Activated CD4-positive, alpha-beta memory T cell treated with anti-CD3 and anti-CD28 coated beads for 36 hours (primary cell): ENCODE measurements at regions of chr7 and their contacts with region 1.

Region 1: DNA sequence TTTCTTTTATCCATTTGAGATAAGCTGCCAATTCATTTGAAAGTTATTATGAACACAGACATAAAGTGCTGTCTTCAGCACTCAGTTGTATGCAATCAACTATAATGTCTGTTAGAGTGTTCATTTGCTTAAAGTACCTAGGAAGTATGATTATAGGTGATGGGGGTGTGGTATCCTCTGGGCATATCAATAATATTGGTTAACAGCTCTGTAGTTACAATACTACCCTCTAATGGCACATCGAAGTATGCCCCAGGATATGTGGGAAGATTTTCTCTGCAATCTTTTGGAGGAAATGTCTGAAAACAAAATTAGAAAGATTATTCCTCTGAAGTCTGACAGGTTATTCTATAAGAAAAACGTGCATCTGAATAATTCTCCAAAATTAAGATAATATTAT is 429.7 kb downstream of the ARL4A start:
- DNase-seq: no peak
- H3K4me3 Mint-ChIP-seq: no peak overlapping the region
- H3K27ac Mint-ChIP-seq: no peak overlapping the region
- H3K4me1 Mint-ChIP-seq: no peaks in the 10 kb centered on the region
- H3K27me3 Mint-ChIP-seq: peaks cover 4% of the 10 kb centered on the region

Region 2: GRCh38 chr7:12715372-12716133 is 401.6 kb before region 1 on chr7:
- CTCF ChIA-PET with region 1: no interaction called
- POLR2A ChIA-PET with region 1: no interaction called
- intact Hi-C with region 1: loop called (anchors 10 kb)
- DNase-seq: peak; percentile 53
- H3K4me3 Mint-ChIP-seq: no peak overlapping the region
- H3K27ac Mint-ChIP-seq: no peak overlapping the region
- H3K4me1 Mint-ChIP-seq: peaks cover 22% of the 10 kb centered on the region
- H3K27me3 Mint-ChIP-seq: no peaks in the 10 kb centered on the region

Region 3: DNA sequence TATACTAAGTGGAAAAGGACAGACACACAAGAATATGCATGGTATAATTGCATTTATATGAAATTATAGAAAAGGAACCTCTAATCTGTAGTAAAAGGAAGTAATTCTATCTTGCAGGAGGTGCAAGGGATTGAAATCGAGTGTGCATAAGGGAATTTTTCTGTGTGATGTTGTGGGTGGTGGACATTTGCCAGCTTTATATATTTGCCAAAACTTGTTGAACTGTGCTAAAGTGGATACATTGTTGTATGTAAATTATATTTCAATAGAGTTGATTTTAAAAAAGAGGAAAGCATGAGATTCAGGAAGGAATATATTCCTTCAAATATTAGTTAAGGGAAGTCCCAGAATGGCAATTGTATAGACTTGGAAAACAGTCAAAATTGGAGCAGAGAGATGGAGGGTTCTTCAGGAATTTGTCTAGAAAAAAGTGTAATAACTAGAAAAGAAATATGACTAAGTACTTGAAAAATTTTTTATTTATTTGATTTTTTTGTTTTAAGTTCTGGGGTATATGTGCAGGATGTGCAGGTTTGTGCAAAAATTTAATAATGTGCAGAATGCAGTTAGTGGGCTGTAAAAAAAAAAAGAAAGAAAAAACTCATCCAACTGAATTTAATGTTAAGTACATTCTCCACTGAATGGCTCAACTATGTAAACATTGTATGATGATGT is 333.5 kb before region 1 on chr7:
- CTCF ChIA-PET with region 1: no interaction called
- POLR2A ChIA-PET with region 1: no interaction called
- intact Hi-C with region 1: no loop called
- DNase-seq: no peak
- H3K4me3 Mint-ChIP-seq: no peak overlapping the region
- H3K27ac Mint-ChIP-seq: no peak overlapping the region
- H3K4me1 Mint-ChIP-seq: peaks cover under 1% of the 10 kb centered on the region
- H3K27me3 Mint-ChIP-seq: no peaks in the 10 kb centered on the region

Region 4: DNA sequence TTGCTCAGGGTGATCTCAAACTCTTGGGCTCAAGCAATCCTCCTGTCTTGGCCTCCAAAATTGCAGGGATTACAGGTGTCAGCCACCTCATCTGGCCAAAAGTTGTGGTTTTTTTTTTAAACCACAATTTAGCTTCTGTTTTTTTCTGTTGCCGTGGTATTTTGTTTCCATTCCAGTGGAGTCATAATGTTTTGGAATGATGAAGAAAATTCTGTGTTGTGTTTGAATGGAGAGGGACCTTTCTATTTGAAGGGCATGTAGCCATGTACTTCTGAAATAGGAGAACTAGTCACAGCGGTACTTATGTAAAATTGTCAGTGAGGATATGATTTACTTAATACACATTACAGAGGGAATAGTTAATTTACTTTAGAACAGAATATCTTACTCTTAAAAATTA is 228.4 kb before region 1 on chr7:
- CTCF ChIA-PET with region 1: no interaction called
- POLR2A ChIA-PET with region 1: no interaction called
- intact Hi-C with region 1: loop called (anchors 10 kb)
- DNase-seq: no peak
- H3K4me3 Mint-ChIP-seq: no peak overlapping the region
- H3K27ac Mint-ChIP-seq: no peak overlapping the region
- H3K4me1 Mint-ChIP-seq: no peaks in the 10 kb centered on the region
- H3K27me3 Mint-ChIP-seq: peaks cover 6% of the 10 kb centered on the region